Ascending aorta (tissue), 2 donors: ENCODE measurements at regions of chr15 and their contacts with region 1.

Region 1: GRCh38 chr15:49876401-49877038 is 242.5 kb downstream of the ATP8B4 start:
- DNase-seq: no peak
- H3K4me3 ChIP-seq: no peak overlapping the region
- H3K27ac ChIP-seq: peak overlapping the region; percentile 88 to 90
- H3K4me1 ChIP-seq: peaks cover 13 to 22% of the 10 kb centered on the region in 2 donors
- H3K27me3 ChIP-seq: no peaks in the 10 kb centered on the region
- CTCF ChIP-seq: peak; percentile 15 to 38 (median 33)

Region 2: DNA sequence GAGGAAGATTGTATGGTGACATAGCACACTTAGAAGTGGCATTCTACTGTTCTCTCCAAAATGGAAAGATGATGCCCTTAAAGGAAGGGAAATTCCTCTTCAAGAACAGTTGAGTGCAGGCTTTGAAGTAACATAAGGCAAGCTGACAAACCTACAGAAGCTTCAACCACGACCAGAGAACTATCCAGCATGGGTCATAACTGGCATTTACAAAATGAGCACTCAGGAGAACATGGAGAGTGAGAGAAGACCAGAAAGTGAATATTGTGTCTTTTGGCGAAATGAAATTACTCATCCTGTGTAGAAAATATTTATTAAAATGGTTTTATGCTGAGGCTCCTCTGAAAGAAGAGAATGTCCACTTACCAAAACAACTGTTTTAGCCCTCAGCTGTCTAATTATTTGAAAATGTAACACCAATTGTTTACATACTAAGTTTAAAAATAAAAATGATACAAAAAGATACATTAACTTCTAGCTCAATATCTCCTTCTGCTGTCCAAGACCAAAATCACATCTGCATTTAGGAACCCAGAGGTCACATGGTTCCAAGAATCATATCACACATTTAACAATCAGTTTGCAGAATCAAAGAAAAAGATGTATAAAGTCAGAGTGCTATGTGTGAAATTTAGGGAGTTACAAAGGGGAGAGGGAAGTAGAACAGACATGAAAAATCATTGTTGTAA is 25.6 kb after region 1 on chr15:
- intact Hi-C with region 1: loop called (anchors 2 kb)
- DNase-seq: no peak
- H3K4me3 ChIP-seq: peak overlapping the region in 1 of 2 donors; percentile 4
- H3K27ac ChIP-seq: peak overlapping the region; percentile 83 to 84
- H3K4me1 ChIP-seq: peaks cover 5 to 12% of the 10 kb centered on the region in 2 donors
- H3K27me3 ChIP-seq: no peaks in the 10 kb centered on the region
- CTCF ChIP-seq: peak in 2 of 3 experiments; percentile 11 to 12

Region 3: GRCh38 chr15:50003786-50004334 is 127.3 kb after region 1 on chr15:
- intact Hi-C with region 1: loop called (anchors 5 kb)
- DNase-seq: peak; percentile 31 to 83
- H3K4me3 ChIP-seq: no peak overlapping the region
- H3K27ac ChIP-seq: no peak overlapping the region
- H3K4me1 ChIP-seq: no peaks in the 10 kb centered on the region
- H3K27me3 ChIP-seq: no peaks in the 10 kb centered on the region
- CTCF ChIP-seq: peak; percentile 67 to 75 (median 71)

Region 4: DNA sequence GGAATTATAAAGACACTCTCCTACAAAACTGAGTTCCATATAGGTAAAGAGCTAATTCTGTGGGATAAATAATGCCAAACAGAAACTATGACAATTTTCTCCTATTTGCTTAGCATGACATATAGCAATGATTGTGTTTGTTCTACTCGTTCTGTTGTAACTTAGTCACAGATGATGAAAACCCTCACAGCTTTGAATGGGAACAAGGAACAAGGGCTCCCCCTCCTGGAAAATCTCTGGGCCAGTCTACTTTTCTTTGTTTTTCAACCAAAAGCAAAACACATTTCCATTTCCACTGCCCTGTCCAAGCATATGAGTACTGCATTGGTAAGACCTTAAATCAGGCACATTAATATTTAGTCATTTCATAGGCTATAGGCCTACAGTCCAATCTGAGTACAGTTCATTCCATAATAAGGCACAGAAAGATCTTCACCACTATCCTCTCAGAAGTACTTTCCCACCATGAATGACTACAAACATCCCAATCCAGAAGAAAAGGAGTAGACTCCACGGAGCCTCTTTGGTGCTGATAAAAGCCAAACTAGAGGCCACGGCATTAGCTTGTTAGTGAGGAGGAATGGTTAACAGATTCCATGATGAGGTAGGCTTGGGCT is 175.4 kb after region 1 on chr15:
- intact Hi-C with region 1: loop called (anchors 10 kb)
- DNase-seq: peak in 1 of 2 donors; percentile 76
- H3K4me3 ChIP-seq: no peak overlapping the region
- H3K27ac ChIP-seq: no peak overlapping the region
- H3K4me1 ChIP-seq: peaks cover 0 to 11% of the 10 kb centered on the region in 2 donors
- H3K27me3 ChIP-seq: no peaks in the 10 kb centered on the region
- CTCF ChIP-seq: peak; percentile 49 to 73 (median 59)